Activated CD8-positive, alpha-beta T cell treated with anti-CD3 and anti-CD28 coated beads, Interleukin-2, amount 10 ng/mL, durations not matched to agents 7 days and 5 days (primary cell): ENCODE measurements at regions of chr5 and their contacts with region 1.

Region 1: GRCh38 chr5:100827481-100827889 is 75.6 kb downstream of the ST8SIA4 start:
- DNase-seq: no peak
- ATAC-seq: no peak
- H3K4me3 Mint-ChIP-seq: no peak overlapping the region
- H3K27ac Mint-ChIP-seq: no peak overlapping the region
- H3K4me1 Mint-ChIP-seq: peaks cover 18% of the 10 kb centered on the region
- H3K27me3 Mint-ChIP-seq: no peaks in the 10 kb centered on the region

Region 2: GRCh38 chr5:100840384-100840783 is 12.9 kb after region 1 on chr5:
- CTCF ChIA-PET with region 1: interaction called, 16 read pairs
- POLR2A ChIA-PET with region 1: interaction called, 3 read pairs
- DNase-seq: peak; percentile 25
- ATAC-seq: peak; percentile 46
- H3K4me3 Mint-ChIP-seq: no peak overlapping the region
- H3K27ac Mint-ChIP-seq: peak overlapping the region; percentile 26
- H3K4me1 Mint-ChIP-seq: peaks cover 53% of the 10 kb centered on the region
- H3K27me3 Mint-ChIP-seq: no peaks in the 10 kb centered on the region